ENCODE measurements at regions of chr19 and their contacts with region 1.

Region 1: DNA sequence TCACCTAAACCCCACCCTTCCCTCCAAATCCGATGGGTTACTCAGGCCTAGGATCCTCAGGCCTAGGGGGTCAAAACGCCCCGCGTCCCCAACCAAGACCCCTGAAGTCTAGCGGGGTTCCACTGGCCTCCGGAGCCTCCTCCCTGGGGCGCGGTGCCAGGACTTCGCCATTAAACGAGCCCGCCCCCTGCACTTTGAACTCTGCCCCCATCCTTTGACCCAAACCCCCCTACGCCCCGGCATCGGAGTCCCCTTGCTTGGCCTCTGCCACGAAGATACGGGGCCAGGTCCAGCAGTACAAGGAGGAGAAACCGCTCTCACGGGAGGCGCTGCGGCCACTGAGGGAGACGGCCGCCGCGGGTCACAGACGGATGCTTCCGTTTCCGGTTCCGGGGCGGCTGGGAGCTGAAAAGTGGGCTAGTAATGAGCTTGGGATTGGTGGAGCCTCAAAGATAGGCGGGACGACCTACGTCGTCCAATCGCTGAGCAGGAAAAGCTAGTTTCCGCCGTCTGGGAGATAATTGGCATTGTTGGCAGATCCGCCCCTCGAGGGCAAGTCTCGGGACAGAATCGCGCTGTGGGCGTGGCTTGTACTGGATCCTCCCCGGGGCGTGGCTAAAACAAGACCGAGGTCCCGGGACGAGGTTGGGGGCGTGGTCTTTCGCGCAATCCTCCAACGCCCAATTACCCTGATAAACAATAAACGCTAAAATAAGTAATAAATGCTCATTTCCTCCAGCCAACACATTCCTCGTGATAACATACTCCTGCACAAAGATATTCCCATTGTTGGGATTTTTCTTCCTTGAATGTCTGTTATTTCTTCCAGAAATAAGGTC is 5.7 kb upstream of the ZNF77 start:
- DNase-seq: peak; percentile 100
- H3K4me3 ChIP-seq: peak overlapping the region; percentile 16 to 82 (median 57)
- H3K27ac ChIP-seq: peak overlapping the region; percentile 95
- H3K4me1 ChIP-seq: peaks cover 27% of the 10 kb centered on the region
- H3K27me3 ChIP-seq: no peaks in the 10 kb centered on the region
- CTCF ChIP-seq: no peak
- POLR2A ChIP-seq: peak; percentile 74

Region 2: DNA sequence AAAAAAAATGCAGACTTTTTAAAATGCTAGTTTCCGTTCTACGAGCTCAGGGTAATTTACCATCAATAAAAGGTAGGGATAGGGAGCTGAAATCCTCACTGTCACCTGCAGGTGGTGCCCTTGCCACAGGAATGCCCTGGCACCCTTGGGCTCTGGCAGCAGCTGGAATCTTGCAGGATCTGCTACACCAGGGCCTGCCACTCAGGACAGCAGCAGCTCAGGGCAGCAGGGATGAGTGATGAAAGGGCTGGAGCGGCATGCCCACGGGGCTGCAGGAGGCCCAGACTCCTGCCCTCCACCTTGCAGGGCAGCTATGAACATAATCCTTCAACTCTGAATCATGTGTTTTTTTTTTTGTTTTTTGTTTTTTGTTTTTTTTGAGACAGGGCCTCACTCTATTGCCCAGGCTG is 302.0 kb before region 1 on chr19:
- CTCF ChIA-PET with region 1: interaction called, 34 read pairs
- POLR2A ChIA-PET with region 1: no interaction called
- dilution Hi-C with region 1: no loop called
- intact Hi-C with region 1: loop called (anchors 1 kb)
- DNase-seq: peak; percentile 72
- H3K4me3 ChIP-seq: no peak overlapping the region
- H3K27ac ChIP-seq: no peak overlapping the region
- H3K4me1 ChIP-seq: no peaks in the 10 kb centered on the region
- H3K27me3 ChIP-seq: peaks cover 0 to 3% of the 10 kb centered on the region in 2 experiments
- CTCF ChIP-seq: peak; percentile 73 to 87
- POLR2A ChIP-seq: no peak

Region 3: DNA sequence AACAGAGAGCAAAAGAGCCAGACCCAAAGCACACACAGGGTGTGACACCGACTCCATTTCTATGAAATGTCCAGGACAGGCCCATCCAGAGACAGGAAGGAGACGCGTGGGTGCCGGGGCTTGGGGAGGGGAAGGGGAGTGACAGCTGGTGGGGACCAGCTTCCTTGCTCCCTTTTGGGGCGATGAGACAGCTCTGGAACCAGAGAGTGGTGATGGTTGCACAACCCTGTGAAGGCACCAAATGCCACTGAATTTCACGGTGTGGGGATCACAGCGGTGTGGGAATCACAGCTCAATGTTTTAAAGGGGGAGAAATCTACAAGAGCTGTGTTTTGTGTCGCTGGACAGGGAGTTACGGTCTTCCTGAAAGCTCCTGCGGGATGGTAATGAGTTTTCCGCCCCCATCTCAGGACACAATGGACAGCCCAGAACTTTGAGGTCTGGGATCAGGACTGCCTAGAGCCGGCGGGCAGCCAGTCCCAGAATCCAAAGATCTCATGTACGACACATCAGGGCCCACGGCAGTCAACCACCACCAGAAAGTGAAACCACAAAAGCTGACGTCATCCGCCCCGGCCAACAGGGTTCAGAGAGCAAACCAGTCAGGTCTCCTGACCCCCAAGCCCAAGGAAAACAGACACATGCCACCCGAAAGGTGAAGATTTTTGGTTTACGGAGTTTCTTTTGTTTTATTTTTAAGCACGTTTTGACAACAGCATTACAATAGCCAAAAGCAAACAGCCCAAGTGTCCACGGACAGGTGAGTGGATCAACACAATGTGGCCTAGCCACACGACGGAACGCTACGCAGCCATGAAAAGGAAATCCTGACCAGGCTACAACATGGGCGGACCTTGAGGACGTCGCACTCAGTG is 174.7 kb before region 1 on chr19:
- CTCF ChIA-PET with region 1: no interaction called
- POLR2A ChIA-PET with region 1: no interaction called
- dilution Hi-C with region 1: no loop called
- intact Hi-C with region 1: no loop called
- DNase-seq: peak; percentile 64
- H3K4me3 ChIP-seq: peak overlapping the region in 2 of 3 experiments; percentile 17 to 22
- H3K27ac ChIP-seq: peak overlapping the region; percentile 62
- H3K4me1 ChIP-seq: no peaks in the 10 kb centered on the region
- H3K27me3 ChIP-seq: no peaks in the 10 kb centered on the region
- CTCF ChIP-seq: no peak
- POLR2A ChIP-seq: no peak

Region 4: GRCh38 chr19:2887391-2887914 is 63.1 kb before region 1 on chr19:
- CTCF ChIA-PET with region 1: interaction called, 105 read pairs
- POLR2A ChIA-PET with region 1: interaction called, 15 read pairs
- dilution Hi-C with region 1: no loop called
- intact Hi-C with region 1: loop called (anchors 1 kb)
- DNase-seq: peak; percentile 85
- H3K4me3 ChIP-seq: no peak overlapping the region
- H3K27ac ChIP-seq: no peak overlapping the region
- H3K4me1 ChIP-seq: peaks cover 3% of the 10 kb centered on the region
- H3K27me3 ChIP-seq: no peaks in the 10 kb centered on the region
- CTCF ChIP-seq: peak; percentile 58 to 60
- POLR2A ChIP-seq: no peak

Region 5: GRCh38 chr19:2977001-2977685 is 26.6 kb after region 1 on chr19 and contains the start of gene TLE6:
- CTCF ChIA-PET with region 1: interaction called, 22 read pairs
- POLR2A ChIA-PET with region 1: no interaction called
- dilution Hi-C with region 1: no loop called
- intact Hi-C with region 1: loop called (anchors 1 kb)
- DNase-seq: peak; percentile 92
- H3K4me3 ChIP-seq: peak within 1 kb of the TSS; percentile 15 to 47 (median 33)
- H3K27ac ChIP-seq: peak within 1 kb of the TSS; percentile 40
- H3K4me1 ChIP-seq: peaks cover 18% of the 10 kb centered on the region
- H3K27me3 ChIP-seq: no peaks in the 10 kb centered on the region
- CTCF ChIP-seq: no peak
- POLR2A ChIP-seq: no peak
- total RNA-seq, gene TLE6: 1.9 and 2.0 TPM in 2 replicates

Region 6: DNA sequence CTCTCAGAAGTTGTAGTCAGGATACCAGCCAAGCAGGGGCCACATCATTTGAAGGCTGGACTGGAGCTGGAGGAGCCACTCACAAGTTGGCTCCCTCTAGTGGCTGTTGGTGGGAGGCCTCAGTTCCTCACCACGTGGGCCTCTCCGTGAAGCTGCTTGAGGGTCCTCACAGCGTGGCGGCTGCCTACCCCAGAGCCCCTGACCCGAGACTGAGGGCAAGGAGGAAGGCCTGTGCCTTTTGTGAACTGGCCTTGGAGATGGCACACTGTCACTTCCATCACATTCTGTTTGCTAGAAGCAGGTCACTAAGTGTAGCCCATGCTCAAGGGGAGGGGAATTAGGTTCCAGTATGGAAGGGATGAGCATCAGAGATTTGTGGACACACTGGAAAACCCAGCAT is 158.3 kb after region 1 on chr19:
- CTCF ChIA-PET with region 1: interaction called, 200 read pairs
- POLR2A ChIA-PET with region 1: interaction called, 7 read pairs
- dilution Hi-C with region 1: no loop called
- intact Hi-C with region 1: loop called (anchors 1 kb)
- DNase-seq: peak; percentile 62
- H3K4me3 ChIP-seq: no peak overlapping the region
- H3K27ac ChIP-seq: no peak overlapping the region
- H3K4me1 ChIP-seq: no peaks in the 10 kb centered on the region
- H3K27me3 ChIP-seq: no peaks in the 10 kb centered on the region
- CTCF ChIP-seq: peak; percentile 85 to 93
- POLR2A ChIP-seq: no peak

Region 7: DNA sequence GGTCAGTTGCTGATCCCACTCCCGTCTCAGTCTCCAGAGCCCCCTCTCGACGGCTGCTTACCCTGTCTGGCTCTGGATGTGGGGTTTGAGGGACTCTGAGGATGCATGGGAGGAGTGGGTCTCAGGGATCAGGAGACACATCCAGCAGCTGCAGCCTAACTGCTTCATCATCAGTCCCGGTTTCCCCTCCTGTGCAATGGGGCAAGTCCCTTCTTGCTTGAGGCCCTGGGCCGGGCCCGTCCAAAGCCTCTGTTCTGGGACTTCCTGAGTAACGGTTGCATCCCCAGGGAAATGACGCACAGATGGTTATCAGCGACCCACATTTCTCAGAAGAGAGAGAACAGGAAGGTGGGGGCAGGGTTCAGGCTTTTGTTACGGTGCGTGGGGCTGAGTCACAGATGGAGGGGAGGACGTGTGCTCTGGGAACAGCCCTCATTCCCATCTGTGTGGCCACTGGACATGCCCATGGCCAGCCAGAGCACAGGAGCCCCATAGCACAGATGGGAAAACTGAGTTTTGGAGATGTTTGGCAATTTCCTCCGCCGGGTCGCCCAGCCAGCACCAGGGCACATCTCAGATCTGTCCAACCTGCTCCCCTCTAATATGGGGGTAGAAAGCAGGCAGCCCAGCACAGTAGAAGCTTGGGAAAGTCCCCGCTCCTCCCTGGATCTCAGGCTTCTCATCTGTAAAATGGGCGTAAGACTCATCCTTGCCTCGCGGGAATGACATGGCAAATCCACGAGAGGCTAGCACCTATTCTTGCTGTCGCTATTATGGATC is 204.6 kb after region 1 on chr19:
- CTCF ChIA-PET with region 1: interaction called, 4 read pairs
- POLR2A ChIA-PET with region 1: no interaction called
- dilution Hi-C with region 1: no loop called
- intact Hi-C with region 1: loop called (anchors 1 kb)
- DNase-seq: peak; percentile 100
- H3K4me3 ChIP-seq: peak overlapping the region in 1 of 3 experiments; percentile 6
- H3K27ac ChIP-seq: peak overlapping the region; percentile 99
- H3K4me1 ChIP-seq: peaks cover 13% of the 10 kb centered on the region
- H3K27me3 ChIP-seq: no peaks in the 10 kb centered on the region
- CTCF ChIP-seq: no peak
- POLR2A ChIP-seq: peak; percentile 91